ENCODE measurements at regions of chr9 and their contacts with region 1.

Region 1: DNA sequence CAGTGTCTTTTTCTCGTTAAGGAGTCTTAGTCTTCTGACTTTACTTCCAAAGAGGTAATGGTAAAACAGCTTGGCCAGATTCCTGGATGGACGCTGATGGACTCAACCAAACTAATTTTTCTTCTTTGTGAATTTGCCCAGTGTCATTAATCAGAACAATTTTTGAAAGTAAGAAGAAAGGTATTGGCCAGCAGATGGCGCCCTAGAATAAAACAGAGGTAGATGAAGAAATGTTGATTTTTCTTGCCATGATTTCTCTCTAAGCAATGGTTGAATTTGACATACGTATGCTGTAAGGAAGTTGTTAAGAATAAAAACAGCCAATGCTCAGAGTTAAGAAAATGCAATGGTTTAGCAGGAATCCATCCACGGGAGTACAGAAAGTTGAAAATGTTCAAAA is 500.0 kb downstream of the DIRAS2 start:
- ATAC-seq: no peak
- H3K4me3 ChIP-seq: no peak overlapping the region
- H3K27ac ChIP-seq: no peak overlapping the region
- H3K4me1 ChIP-seq: peaks cover 2 to 3% of the 10 kb centered on the region in 2 donors

Region 2: DNA sequence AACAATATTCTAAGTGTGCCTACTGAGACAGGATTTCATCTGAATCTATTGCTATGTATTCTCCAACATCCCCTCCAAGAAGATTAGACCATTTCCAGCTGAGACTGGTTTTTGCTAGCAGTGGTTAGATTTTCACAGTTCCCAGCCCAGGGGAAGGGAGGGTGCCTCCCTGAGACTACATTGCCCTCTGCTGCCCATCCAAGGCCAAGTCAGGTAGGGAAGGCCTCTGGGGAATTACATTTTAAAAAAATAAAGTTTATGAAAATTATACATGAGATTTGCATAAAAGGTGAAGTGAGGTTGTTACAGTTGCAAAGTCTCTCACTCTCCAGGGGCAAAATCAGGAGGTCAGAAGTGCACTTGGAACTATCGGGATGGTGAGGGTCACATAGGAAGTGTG is 631.0 kb after region 1 on chr9:
- in situ Hi-C with region 1: loop called in 1 of 9 experiments (anchors 25 kb)
- ATAC-seq: peak; percentile 69 to 94 (median 78)
- H3K4me3 ChIP-seq: no peak overlapping the region
- H3K27ac ChIP-seq: no peak overlapping the region
- H3K4me1 ChIP-seq: peaks cover 2 to 10% of the 10 kb centered on the region in 2 donors

Measured in motor neuron (in vitro differentiated cells).